Naive thymus-derived CD4-positive, alpha-beta T cell (primary cell): ENCODE measurements at regions of chr6 and their contacts with region 1.

Region 1: DNA sequence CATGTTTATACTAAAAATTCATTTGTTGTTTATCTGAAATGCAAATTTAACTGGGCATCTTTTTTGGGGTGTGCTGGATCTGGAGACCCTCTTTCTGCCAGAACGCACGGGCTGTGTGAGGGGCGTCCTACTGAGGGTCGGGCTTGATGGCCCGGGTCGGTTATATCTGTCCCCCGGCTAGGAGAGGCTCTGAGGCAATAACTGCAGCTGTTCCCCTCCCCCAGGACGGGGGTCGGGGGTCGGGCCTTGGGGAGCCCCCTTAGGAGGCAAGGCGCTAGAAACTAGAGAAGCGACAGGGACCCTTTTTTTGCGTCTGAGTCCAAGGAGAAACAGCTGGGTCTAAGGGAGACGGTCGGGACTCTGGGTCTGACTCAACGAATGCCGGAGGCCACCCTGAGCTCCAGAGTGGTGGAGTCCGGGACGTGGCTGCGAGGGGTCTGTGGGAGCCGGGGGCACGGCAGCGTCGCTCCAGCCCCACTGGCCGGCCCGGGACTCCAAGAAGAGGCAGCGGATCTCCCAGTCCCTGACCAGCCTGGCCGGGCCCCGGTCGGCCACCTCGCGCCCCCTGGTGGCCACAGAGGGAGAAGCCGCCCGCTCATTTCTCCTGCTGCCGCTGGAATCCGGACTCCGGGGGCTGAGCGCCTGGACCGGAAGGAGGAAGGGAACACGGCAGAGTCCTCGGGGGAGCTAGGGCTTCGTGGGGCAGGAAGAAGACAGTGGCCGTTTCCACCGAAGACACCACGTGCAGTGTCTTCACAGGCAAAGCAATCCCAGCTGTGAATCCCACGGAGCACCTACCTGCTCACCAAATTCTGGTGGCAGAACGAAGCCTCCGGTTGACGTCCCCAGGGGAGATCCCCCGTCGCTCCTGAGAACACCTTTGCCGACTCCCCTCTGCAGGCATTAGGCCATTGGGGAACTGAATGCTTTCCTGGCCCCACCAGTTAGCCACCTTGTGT is 24.0 kb upstream of the SCML4 start:
- DNase-seq: peak; percentile 66 to 88 (median 77)
- ATAC-seq: peak; percentile 92
- H3K4me3 ChIP-seq: peak overlapping the region; percentile 76
- H3K4me3 Mint-ChIP-seq: peak overlapping the region; percentile 73 to 91 (median 86)
- H3K27ac ChIP-seq: peak overlapping the region; percentile 67
- H3K27ac Mint-ChIP-seq: peak overlapping the region; percentile 68 to 95 (median 85)
- H3K4me1 ChIP-seq: peaks cover 0 to 21% of the 10 kb centered on the region in 2 donors
- H3K4me1 Mint-ChIP-seq: peaks cover 10 to 49% (median 26%) of the 10 kb centered on the region in 7 donors
- H3K27me3 ChIP-seq: no peaks in the 10 kb centered on the region
- H3K27me3 Mint-ChIP-seq: peaks cover 0 to 7% (median 0%) of the 10 kb centered on the region in 5 donors

Region 2: DNA sequence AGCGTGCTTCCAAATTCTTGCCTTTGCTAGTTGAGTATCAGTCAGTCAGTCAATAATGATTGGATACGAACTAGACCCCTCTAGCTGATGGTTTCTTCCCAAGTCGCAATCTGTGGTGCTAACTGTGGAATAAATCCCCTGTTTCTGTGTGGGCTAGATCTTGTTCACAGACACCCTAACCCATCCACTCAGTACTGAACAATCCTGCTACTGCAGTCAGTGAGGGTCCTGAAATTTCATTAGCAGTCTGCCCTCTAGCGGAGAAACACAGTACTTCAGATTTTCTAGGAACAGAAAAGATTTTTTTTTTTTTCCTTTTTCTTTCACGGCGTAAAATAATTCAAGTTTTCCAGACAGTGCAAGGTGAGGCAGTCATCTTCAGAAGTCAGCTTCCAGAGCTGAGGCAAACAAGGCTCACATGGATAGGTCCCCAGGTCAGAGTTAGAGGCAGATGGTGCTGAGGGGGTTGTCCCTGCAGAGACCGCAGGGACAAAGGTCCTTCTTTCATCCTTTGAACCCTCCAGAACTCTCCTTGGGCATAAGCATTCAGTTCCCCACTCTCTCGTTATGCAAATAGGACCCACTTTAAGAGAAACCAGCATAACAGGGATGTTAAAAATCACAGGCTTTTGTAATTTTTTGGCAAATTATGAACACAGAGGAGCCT is 143.6 kb before region 1 on chr6:
- CTCF ChIA-PET with region 1: interaction called, 6 read pairs
- POLR2A ChIA-PET with region 1: interaction called, 5 read pairs
- intact Hi-C with region 1: loop called in 1 of 2 experiments (anchors 1 kb)
- DNase-seq: peak in 3 of 9 donors; percentile 21 to 39 (median 34)
- ATAC-seq: peak; percentile 44
- H3K4me3 ChIP-seq: no peak overlapping the region
- H3K4me3 Mint-ChIP-seq: no peak overlapping the region
- H3K27ac ChIP-seq: peak overlapping the region; percentile 34
- H3K27ac Mint-ChIP-seq: peak overlapping the region in 8 of 9 donors; percentile 52 to 89 (median 74)
- H3K4me1 ChIP-seq: peaks cover 0 to 11% of the 10 kb centered on the region in 2 donors
- H3K4me1 Mint-ChIP-seq: peaks cover 11 to 71% (median 46%) of the 10 kb centered on the region in 7 donors
- H3K27me3 ChIP-seq: no peaks in the 10 kb centered on the region
- H3K27me3 Mint-ChIP-seq: peaks cover 0 to 3% (median 0%) of the 10 kb centered on the region in 5 donors

Region 3: GRCh38 chr6:107731422-107732319 is 116.5 kb before region 1 on chr6:
- CTCF ChIA-PET with region 1: interaction called, 128 read pairs
- POLR2A ChIA-PET with region 1: interaction called, 72 read pairs
- intact Hi-C with region 1: loop called (anchors 1 kb)
- DNase-seq: peak in 7 of 9 donors; percentile 45 to 64 (median 58)
- ATAC-seq: peak; percentile 53
- H3K4me3 ChIP-seq: peak overlapping the region; percentile 68
- H3K4me3 Mint-ChIP-seq: peak overlapping the region; percentile 85 to 99 (median 97)
- H3K27ac ChIP-seq: peak overlapping the region; percentile 77
- H3K27ac Mint-ChIP-seq: peak overlapping the region; percentile 77 to 98 (median 95)
- H3K4me1 ChIP-seq: peaks cover 55 to 65% of the 10 kb centered on the region in 2 donors
- H3K4me1 Mint-ChIP-seq: peaks cover 56 to 86% (median 76%) of the 10 kb centered on the region in 7 donors
- H3K27me3 ChIP-seq: no peaks in the 10 kb centered on the region
- H3K27me3 Mint-ChIP-seq: peaks cover 0 to 13% (median 0%) of the 10 kb centered on the region in 5 donors

Region 4: GRCh38 chr6:107786709-107787588 is 61.2 kb before region 1 on chr6:
- CTCF ChIA-PET with region 1: interaction called, 32 read pairs
- POLR2A ChIA-PET with region 1: interaction called, 6 read pairs
- intact Hi-C with region 1: loop called (anchors 1 to 5 kb)
- DNase-seq: peak in 7 of 9 donors; percentile 51 to 80 (median 65)
- ATAC-seq: peak; percentile 87
- H3K4me3 ChIP-seq: peak overlapping the region; percentile 34
- H3K4me3 Mint-ChIP-seq: peak overlapping the region; percentile 74 to 88 (median 82)
- H3K27ac ChIP-seq: peak overlapping the region; percentile 70
- H3K27ac Mint-ChIP-seq: peak overlapping the region; percentile 83 to 97 (median 95)
- H3K4me1 ChIP-seq: peaks cover 51 to 78% of the 10 kb centered on the region in 2 donors
- H3K4me1 Mint-ChIP-seq: peaks cover 65 to 92% (median 90%) of the 10 kb centered on the region in 7 donors
- H3K27me3 ChIP-seq: no peaks in the 10 kb centered on the region
- H3K27me3 Mint-ChIP-seq: peaks cover 0 to 6% (median 0%) of the 10 kb centered on the region in 5 donors

Region 5: DNA sequence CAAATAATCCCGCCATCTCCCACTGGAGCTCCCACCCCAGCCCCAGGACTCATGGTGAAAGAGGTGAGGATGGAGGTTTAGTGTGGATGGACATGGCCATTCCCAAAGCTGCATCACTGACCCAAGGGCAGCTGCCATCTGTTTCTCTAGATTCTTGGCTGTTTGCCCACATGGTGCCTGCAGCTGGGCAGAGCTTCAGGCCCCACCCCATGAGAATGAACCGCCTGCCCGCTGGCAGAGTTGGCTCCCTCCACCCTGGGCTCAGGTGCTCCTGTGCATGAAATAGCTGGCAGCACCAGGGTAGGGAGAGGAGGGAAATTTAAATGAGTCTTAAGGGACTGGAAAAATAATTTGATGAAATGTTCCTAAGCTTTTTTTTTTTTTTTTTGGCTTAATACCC is 41.4 kb before region 1 on chr6:
- CTCF ChIA-PET with region 1: interaction called, 18 read pairs
- POLR2A ChIA-PET with region 1: interaction called, 6 read pairs
- intact Hi-C with region 1: no loop called
- DNase-seq: no peak
- ATAC-seq: no peak
- H3K4me3 ChIP-seq: no peak overlapping the region
- H3K4me3 Mint-ChIP-seq: peak overlapping the region in 1 of 10 donors; percentile 50
- H3K27ac ChIP-seq: peak overlapping the region; percentile 10
- H3K27ac Mint-ChIP-seq: peak overlapping the region in 6 of 9 donors; percentile 14 to 91 (median 79)
- H3K4me1 ChIP-seq: peaks cover 12 to 42% of the 10 kb centered on the region in 2 donors
- H3K4me1 Mint-ChIP-seq: peaks cover 27 to 90% (median 83%) of the 10 kb centered on the region in 7 donors
- H3K27me3 ChIP-seq: no peaks in the 10 kb centered on the region
- H3K27me3 Mint-ChIP-seq: no peaks in the 10 kb centered on the region

Region 6: GRCh38 chr6:107866606-107867301 is 18.6 kb after region 1 on chr6:
- CTCF ChIA-PET with region 1: interaction called, 31 read pairs
- POLR2A ChIA-PET with region 1: no interaction called
- intact Hi-C with region 1: loop called (anchors 1 to 2 kb)
- DNase-seq: peak in 7 of 9 donors; percentile 29 to 64 (median 52)
- ATAC-seq: peak; percentile 76
- H3K4me3 ChIP-seq: no peak overlapping the region
- H3K4me3 Mint-ChIP-seq: peak overlapping the region in 1 of 10 donors; percentile 32
- H3K27ac ChIP-seq: no peak overlapping the region
- H3K27ac Mint-ChIP-seq: peak overlapping the region in 3 of 9 donors; percentile 37 to 64 (median 45)
- H3K4me1 ChIP-seq: no peaks in the 10 kb centered on the region
- H3K4me1 Mint-ChIP-seq: peaks cover 0 to 10% (median 4%) of the 10 kb centered on the region in 7 donors
- H3K27me3 ChIP-seq: no peaks in the 10 kb centered on the region
- H3K27me3 Mint-ChIP-seq: peaks cover 0 to 10% (median 0%) of the 10 kb centered on the region in 5 donors